Dendritic cell treated with granulocyte-macrophage colony-stimulating factor and Interleukin-4, amounts not matched to agents 40 ng/mL and 50 ng/mL, for 4 days (primary cell): ENCODE measurements at regions of chr9 and their contacts with region 1.

Region 1: DNA sequence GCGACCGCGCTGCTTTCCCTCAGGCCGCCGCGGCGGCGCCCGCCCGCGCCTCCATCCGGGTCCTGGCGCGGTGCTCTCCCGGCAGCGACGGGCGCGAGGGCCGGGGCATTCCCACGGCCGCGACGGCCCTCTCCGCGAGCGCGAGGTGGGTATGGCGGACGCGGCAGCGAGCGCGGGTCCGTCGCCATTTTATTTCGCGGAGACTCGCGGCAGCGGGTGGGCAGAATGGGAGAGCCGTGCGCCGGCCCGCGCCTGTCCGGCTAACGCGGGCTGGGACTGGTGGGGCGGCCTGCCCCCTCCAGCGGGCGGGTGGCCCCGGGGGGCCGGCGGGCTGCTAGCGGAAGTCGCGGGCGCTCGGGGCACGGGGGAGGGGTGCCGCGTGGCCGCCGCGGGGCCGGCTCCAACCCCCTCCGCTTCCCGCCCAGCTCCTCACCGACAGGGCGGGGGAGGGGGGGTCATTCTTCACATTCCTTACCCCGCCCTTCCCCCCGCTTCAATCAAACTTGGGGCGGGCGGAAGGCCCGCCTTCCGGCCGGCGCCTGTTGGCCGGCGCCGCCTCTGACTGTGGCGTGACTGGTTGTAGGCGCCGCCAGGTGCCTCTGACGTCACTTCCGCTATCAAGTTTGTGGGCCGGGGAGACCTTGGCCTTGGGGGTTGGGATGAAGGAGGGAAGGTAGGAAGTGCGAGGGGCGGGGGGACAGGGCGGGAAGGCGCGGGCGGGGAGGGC is 82.1 kb downstream of the PTPDC1 start:
- H3K4me3 Mint-ChIP-seq: peak overlapping the region; percentile 89
- H3K27ac Mint-ChIP-seq: peak overlapping the region; percentile 94
- H3K4me1 Mint-ChIP-seq: peaks cover 25% of the 10 kb centered on the region
- H3K27me3 Mint-ChIP-seq: no peaks in the 10 kb centered on the region

Region 2: DNA sequence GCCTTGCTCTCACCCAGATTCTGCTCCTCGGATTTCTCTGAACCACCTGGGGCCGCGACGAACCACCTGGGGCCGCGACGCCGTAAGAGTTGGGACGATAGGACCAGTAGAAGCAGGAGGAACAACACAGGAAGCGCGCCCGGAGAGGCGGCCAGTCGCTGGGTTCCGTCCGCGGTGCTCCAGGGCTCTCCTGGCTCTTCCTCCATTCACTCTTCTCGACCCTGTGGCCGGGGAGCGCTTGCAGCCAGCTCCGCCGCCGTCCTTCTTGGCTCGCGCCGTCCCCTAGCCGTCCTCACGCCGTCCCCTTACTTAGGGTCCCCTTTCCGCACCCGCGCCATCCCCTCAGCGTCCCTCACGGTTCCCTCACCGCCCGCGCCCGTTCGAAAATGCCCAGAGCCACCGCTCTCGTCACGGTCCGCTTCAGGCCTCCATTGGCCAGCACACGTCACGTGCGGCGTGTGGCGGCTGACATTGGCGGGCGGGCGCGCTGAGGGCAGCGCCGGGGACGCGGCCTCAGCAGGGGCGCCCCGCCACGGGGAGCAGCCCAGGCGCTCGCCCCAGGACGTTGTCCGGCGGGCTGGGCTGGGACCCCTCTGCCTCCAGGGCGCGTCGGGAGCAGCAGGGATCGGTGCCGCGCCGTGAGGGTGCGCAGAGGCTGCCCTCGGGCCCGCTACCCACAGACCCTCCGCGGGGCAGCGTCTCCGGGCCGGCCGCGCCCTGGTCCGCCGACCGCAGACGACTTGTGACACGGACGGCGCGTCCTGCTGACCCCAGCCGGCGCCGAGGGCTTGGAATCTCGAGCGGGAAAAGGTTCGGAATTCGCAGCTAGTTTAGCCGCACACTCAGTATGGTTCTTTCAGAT is 135.9 kb before region 1 on chr9:
- intact Hi-C with region 1: loop called (anchors 5 kb)
- H3K4me3 Mint-ChIP-seq: peak overlapping the region; percentile 87
- H3K27ac Mint-ChIP-seq: peak overlapping the region; percentile 90
- H3K4me1 Mint-ChIP-seq: peaks cover 6% of the 10 kb centered on the region
- H3K27me3 Mint-ChIP-seq: peaks cover 9% of the 10 kb centered on the region

Region 3: DNA sequence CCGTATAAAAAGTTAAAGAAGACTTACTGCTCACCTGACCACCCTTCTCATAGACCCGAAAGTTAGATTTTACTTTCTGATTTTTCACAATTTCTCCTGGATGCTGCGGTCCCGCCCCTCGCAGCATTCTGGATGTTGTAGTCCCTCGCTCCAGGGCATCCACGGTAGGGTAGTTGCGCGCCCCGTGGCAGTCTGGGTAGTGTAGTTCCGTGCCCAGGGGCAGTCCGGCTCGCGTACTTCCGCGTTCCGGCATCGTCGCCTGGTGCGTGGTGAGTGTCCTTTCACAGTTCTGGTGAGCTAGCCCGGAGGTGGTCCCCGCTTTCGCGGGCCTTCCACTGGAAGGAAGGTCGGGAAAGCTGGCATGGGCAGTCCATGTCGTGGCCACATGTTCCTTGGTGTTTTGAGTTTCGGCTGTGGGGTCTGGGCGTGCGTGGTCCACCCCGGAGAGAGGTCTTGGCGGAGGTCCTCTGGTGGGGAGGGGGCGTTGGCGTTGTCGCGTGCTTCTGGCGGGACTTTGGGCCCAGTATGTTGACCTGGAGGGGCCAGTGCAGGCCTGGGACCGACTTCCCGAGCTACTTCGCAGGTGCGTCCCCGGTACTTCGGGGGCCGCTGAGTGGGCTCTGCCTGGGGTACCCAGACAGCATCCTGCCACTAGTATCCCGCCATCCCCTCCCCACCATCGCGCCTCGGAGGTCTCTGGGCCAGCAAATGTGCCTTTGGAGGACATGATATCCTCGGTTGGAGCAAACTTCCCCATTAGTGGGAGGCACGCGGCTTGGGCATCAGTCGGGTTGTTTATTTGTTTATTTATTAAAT is 92.9 kb after region 1 on chr9 and contains the start of gene ZNF169:
- intact Hi-C with region 1: loop called (anchors 2 kb)
- H3K4me3 Mint-ChIP-seq: peak within 1 kb of the TSS; percentile 99
- H3K27ac Mint-ChIP-seq: peak within 1 kb of the TSS; percentile 99
- H3K4me1 Mint-ChIP-seq: peaks cover 34% of the 10 kb centered on the region
- H3K27me3 Mint-ChIP-seq: peaks cover 16% of the 10 kb centered on the region